CD4-positive, alpha-beta T cell (primary cell): ENCODE measurements at regions of chr12 and their contacts with region 1.

Region 1: GRCh38 chr12:112382232-112382796 is at the start of gene HECTD4:
- DNase-seq: peak; percentile 81 to 97 (median 92)
- ATAC-seq: peak; percentile 98
- H3K4me3 ChIP-seq: peak within 1 kb of the TSS; percentile 81
- H3K4me3 Mint-ChIP-seq: peak within 1 kb of the TSS; percentile 99
- H3K27ac ChIP-seq: peak within 1 kb of the TSS; percentile 44 to 62
- H3K27ac Mint-ChIP-seq: peak within 1 kb of the TSS; percentile 85
- H3K4me1 ChIP-seq: peaks cover 19% of the 10 kb centered on the region
- H3K4me1 Mint-ChIP-seq: peaks cover 27% of the 10 kb centered on the region
- H3K27me3 ChIP-seq: no peaks in the 10 kb centered on the region
- H3K27me3 Mint-ChIP-seq: no peaks in the 10 kb centered on the region
- CTCF ChIP-seq: no peak
- total RNA-seq, gene HECTD4: 40.2 to 43.3 TPM

Region 2: DNA sequence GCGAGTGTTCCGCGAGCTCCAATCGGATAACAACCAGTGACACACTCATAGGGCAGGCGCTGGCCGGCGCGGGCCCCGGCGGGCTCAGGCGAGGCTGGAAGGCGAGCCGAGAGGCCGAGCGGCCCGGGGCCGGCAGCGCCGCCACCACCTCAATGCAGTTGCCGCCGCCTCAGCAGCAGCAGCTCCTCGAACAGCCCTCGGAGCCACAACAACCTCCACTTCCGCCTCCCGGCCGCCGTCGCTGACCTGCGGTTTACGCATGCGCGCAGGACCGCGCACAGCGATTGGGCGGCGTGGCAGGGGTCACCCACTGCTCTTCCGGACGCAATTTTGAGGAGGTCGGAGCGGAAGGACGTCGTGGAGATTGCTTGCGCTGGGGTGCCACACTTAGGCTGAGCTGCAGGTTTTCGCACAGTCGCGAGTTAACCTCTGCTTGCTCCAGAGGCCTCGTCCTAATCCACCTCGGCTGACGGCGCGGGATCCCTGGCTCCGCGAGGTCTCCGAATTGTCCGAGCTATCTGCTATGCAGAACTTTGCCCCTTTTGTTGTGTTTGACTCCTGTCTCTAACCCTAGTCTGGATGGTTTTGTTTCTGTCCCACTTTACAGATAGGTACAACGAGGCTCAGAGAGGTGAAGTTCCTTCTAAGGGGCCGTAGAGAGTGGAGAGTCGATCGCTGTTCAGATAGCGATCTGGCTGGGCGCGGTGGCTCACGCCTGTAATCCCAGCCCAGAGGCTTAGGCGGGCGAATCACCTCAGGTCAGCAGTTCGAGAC is 696.4 kb before region 1 on chr12 and contains the starts of genes ACAD10 and BRAP:
- CTCF ChIA-PET with region 1: no interaction called
- POLR2A ChIA-PET with region 1: no interaction called
- intact Hi-C with region 1: loop called in 1 of 2 experiments (anchors 10 kb)
- DNase-seq: peak; percentile 86 to 97 (median 92)
- ATAC-seq: peak; percentile 83
- H3K4me3 ChIP-seq: peak within 1 kb of the TSS; percentile 92
- H3K4me3 Mint-ChIP-seq: peak within 1 kb of the TSS; percentile 95
- H3K27ac ChIP-seq: peak within 1 kb of the TSS; percentile 46 to 76
- H3K27ac Mint-ChIP-seq: peak within 1 kb of the TSS; percentile 86
- H3K4me1 ChIP-seq: peaks cover 27% of the 10 kb centered on the region
- H3K4me1 Mint-ChIP-seq: peaks cover 46% of the 10 kb centered on the region
- H3K27me3 ChIP-seq: no peaks in the 10 kb centered on the region
- H3K27me3 Mint-ChIP-seq: no peaks in the 10 kb centered on the region
- CTCF ChIP-seq: no peak
- total RNA-seq, gene ACAD10: 15.8 to 17.4 TPM
- total RNA-seq, gene BRAP: 22.4 to 25.8 TPM

Region 3: GRCh38 chr12:111841750-111842555 is 540.4 kb before region 1 on chr12 and contains the start of gene MAPKAPK5:
- CTCF ChIA-PET with region 1: no interaction called
- POLR2A ChIA-PET with region 1: no interaction called
- intact Hi-C with region 1: loop called in 1 of 2 experiments (anchors 5 kb)
- DNase-seq: peak; percentile 93 to 99 (median 97)
- ATAC-seq: peak; percentile 83
- H3K4me3 ChIP-seq: peak within 1 kb of the TSS; percentile 100
- H3K4me3 Mint-ChIP-seq: peak within 1 kb of the TSS; percentile 99
- H3K27ac ChIP-seq: peak within 1 kb of the TSS; percentile 81 to 84
- H3K27ac Mint-ChIP-seq: peak within 1 kb of the TSS; percentile 98
- H3K4me1 ChIP-seq: peaks cover 43% of the 10 kb centered on the region
- H3K4me1 Mint-ChIP-seq: peaks cover 67% of the 10 kb centered on the region
- H3K27me3 ChIP-seq: no peaks in the 10 kb centered on the region
- H3K27me3 Mint-ChIP-seq: no peaks in the 10 kb centered on the region
- CTCF ChIP-seq: no peak
- total RNA-seq, gene MAPKAPK5: 62.2 to 63.6 TPM

Region 4: GRCh38 chr12:112108201-112109079 is 273.9 kb before region 1 on chr12 and contains the start of gene NAA25:
- CTCF ChIA-PET with region 1: no interaction called
- POLR2A ChIA-PET with region 1: no interaction called
- intact Hi-C with region 1: loop called in 1 of 2 experiments (anchors 5 kb)
- DNase-seq: peak; percentile 76 to 93 (median 83)
- ATAC-seq: peak; percentile 82
- H3K4me3 ChIP-seq: peak within 1 kb of the TSS; percentile 95
- H3K4me3 Mint-ChIP-seq: peak within 1 kb of the TSS; percentile 95
- H3K27ac ChIP-seq: peak within 1 kb of the TSS; percentile 85 to 86
- H3K27ac Mint-ChIP-seq: peak within 1 kb of the TSS; percentile 94
- H3K4me1 ChIP-seq: peaks cover 28% of the 10 kb centered on the region
- H3K4me1 Mint-ChIP-seq: peaks cover 50% of the 10 kb centered on the region
- H3K27me3 ChIP-seq: no peaks in the 10 kb centered on the region
- H3K27me3 Mint-ChIP-seq: no peaks in the 10 kb centered on the region
- CTCF ChIP-seq: no peak
- total RNA-seq, gene NAA25: 31.1 to 34.6 TPM

Region 5: DNA sequence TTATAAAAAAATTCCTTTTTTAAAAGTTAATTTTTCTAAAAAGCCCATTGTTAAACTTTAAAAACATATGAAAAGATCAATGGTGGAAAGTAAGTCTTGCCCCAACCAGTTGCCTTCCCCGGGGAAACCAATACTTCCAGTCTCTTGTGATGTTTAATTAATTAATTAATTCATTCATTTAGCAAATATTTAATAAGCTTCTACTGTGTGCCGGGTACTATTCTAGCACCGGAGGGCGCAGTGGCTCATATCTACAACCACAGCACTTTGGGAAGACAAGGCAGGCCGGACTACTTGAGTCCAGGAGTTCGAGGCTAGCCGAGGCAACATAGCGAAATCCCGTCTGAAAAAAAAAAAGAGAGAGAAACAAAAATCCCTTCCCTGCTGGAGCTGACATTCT is 87.5 kb before region 1 on chr12:
- CTCF ChIA-PET with region 1: interaction called, 4 read pairs
- POLR2A ChIA-PET with region 1: no interaction called
- intact Hi-C with region 1: loop called in 1 of 2 experiments (anchors 5 kb)
- DNase-seq: peak in 2 of 14 experiments; percentile 4 to 11
- ATAC-seq: no peak
- H3K4me3 ChIP-seq: no peak overlapping the region
- H3K4me3 Mint-ChIP-seq: no peak overlapping the region
- H3K27ac ChIP-seq: no peak overlapping the region
- H3K27ac Mint-ChIP-seq: no peak overlapping the region
- H3K4me1 ChIP-seq: no peaks in the 10 kb centered on the region
- H3K4me1 Mint-ChIP-seq: peaks cover 4% of the 10 kb centered on the region
- H3K27me3 ChIP-seq: no peaks in the 10 kb centered on the region
- H3K27me3 Mint-ChIP-seq: no peaks in the 10 kb centered on the region
- CTCF ChIP-seq: no peak

Region 6: GRCh38 chr12:112482733-112483132 is 100.4 kb after region 1 on chr12:
- CTCF ChIA-PET with region 1: no interaction called
- POLR2A ChIA-PET with region 1: no interaction called
- intact Hi-C with region 1: no loop called
- DNase-seq: no peak
- ATAC-seq: no peak
- H3K4me3 ChIP-seq: no peak overlapping the region
- H3K4me3 Mint-ChIP-seq: no peak overlapping the region
- H3K27ac ChIP-seq: no peak overlapping the region
- H3K27ac Mint-ChIP-seq: no peak overlapping the region
- H3K4me1 ChIP-seq: no peaks in the 10 kb centered on the region
- H3K4me1 Mint-ChIP-seq: no peaks in the 10 kb centered on the region
- H3K27me3 ChIP-seq: no peaks in the 10 kb centered on the region
- H3K27me3 Mint-ChIP-seq: no peaks in the 10 kb centered on the region
- CTCF ChIP-seq: no peak